ENCODE measurements at regions of chr6 and their contacts with region 1.

Region 1: DNA sequence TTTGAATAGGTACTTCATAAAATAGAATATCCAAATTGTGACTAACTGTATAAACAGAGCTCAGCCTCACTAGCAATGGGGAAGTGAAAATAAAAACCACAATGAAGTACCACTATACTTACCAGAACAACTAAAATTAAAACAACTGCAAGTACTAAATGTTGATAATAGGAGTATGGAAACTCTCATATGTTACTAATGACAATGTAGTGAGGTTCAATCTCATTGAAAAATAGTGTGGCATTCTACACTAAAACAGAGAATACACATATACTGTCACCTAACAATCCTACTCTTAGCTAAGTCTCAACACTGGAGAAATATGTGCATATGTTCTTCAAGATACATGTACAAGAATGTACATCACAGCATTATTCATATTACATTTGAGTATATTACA is 132.0 kb upstream of the CARMIL1 start:
- DNase-seq: peak; percentile 64
- H3K4me3 ChIP-seq: peak overlapping the region; percentile 16
- H3K27ac ChIP-seq: peak overlapping the region; percentile 66
- H3K4me1 ChIP-seq: peaks cover 17% of the 10 kb centered on the region
- CTCF ChIP-seq: no peak

Region 2: DNA sequence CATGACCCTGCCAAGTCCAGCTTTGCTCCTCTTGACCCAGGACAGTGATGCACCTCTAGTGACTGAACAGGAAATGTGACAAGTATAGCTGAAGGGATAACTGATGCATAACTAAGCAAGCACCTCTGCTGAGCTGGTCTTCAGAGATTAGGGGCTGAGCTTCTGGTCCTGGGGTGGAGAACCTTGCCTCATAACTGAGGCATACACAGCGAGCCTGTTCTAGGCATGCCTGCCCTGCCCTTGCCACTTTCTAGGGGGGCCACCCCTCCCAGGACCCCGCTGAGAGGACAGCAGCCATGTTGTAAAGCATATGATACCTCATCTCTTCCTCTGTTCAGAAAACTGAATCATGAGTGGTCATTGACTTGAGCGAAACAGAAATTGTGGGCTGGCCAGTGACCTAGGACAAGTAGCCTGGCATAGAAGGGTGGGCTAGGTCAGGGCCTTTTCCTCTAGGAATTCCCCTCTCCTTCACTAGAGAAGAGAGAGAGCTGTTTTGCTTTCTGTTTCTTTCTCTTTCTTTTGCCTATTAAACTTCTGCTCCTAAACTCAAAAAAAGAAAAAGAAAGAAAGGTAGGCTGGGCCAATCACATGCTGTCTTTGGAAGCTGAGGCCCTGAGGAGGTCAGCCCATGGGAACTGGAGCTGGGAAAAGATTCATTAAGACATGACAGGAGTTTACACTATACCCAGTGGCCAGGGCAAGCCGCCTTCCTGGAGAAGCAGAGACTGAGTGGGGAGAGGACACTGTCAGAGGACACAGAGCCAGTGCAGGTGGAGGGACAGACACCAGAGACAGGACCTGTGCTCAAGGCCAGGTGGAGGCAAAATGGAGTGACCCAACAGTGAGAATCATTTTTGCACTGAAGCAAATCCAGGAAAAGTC is 629.3 kb before region 1 on chr6:
- CTCF ChIA-PET with region 1: no interaction called
- POLR2A ChIA-PET with region 1: no interaction called
- intact Hi-C with region 1: no loop called
- DNase-seq: peak; percentile 89
- H3K4me3 ChIP-seq: peak overlapping the region; percentile 54
- H3K27ac ChIP-seq: peak overlapping the region; percentile 98
- H3K4me1 ChIP-seq: peaks cover 91% of the 10 kb centered on the region
- CTCF ChIP-seq: no peak

Region 3: DNA sequence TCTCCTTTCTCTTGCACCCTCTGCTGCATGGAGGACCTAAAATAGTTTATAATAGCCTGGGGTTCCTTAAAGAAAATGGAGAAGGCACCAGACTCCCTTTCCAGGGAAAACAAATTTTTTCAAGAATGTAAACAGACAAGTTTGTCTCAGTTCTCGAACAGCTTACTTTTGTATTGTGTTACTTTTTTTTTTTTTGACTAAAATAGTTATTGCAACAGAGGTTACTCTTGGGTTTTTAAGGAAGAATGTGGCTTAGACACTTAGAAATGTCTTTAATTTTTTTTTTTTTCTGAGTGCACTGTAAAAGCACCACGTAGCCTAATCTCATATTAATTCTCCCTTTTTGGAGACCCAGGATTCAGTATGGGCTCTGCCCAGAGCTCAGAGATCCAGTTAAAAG is 16.7 kb before region 1 on chr6:
- CTCF ChIA-PET with region 1: no interaction called
- POLR2A ChIA-PET with region 1: interaction called, 10 read pairs
- intact Hi-C with region 1: no loop called
- DNase-seq: no peak
- H3K4me3 ChIP-seq: no peak overlapping the region
- H3K27ac ChIP-seq: no peak overlapping the region
- H3K4me1 ChIP-seq: no peaks in the 10 kb centered on the region
- CTCF ChIP-seq: no peak

Measured in OCI-LY7 (cell line).